Activated T-helper 1 cell treated with anti-CD3 and anti-CD28 coated beads, Interleukin-12 subunit alpha, Interleukin-12 subunit beta, Interleukin-2, Interleukin-4 antibody, amounts not matched to agents 30 ng/mL and 10 ng/mL and 1 ng/mL, durations not matched to agents 14 hours and 24 hours and 36 hours (primary cell): ENCODE measurements at regions of chr18 and their contacts with region 1.

Region 1: GRCh38 chr18:12838178-12838634 is 45.8 kb downstream of the PTPN2 start:
- DNase-seq: peak; percentile 16
- H3K4me3 Mint-ChIP-seq: peak overlapping the region; percentile 78
- H3K27ac Mint-ChIP-seq: peak overlapping the region; percentile 92
- H3K4me1 Mint-ChIP-seq: peaks cover 78% of the 10 kb centered on the region
- H3K27me3 Mint-ChIP-seq: no peaks in the 10 kb centered on the region

Region 2: GRCh38 chr18:12702221-12703095 is 135.7 kb before region 1 on chr18 and contains the starts of genes CEP76 and PSMG2:
- intact Hi-C with region 1: loop called (anchors 1 kb)
- DNase-seq: peak; percentile 80
- H3K4me3 Mint-ChIP-seq: peak within 1 kb of the TSS; percentile 97
- H3K27ac Mint-ChIP-seq: peak within 1 kb of the TSS; percentile 92
- H3K4me1 Mint-ChIP-seq: peaks cover 54% of the 10 kb centered on the region
- H3K27me3 Mint-ChIP-seq: no peaks in the 10 kb centered on the region
- total RNA-seq, gene CEP76: 16.1 and 17.5 TPM in 2 replicates
- total RNA-seq, gene PSMG2: 113 and 118 TPM in 2 replicates

Region 3: DNA sequence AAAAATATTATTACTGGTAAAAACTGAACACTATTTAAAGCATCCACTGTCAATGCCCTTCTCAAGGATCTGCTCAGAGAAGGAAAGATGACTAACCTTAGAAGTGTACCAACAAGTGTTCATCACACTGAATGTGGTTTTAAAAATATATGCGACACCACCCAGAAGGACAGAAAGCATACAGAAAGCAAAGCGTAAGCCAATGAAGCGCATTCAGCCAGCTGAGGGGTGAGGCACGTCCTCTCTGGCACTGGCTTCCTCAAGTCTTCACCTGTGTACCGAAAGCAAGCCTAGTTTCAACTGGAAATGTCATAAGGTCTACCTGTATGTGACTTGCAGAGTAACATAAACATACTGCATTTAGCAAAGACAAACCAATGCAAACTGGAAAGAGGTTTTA is 46.6 kb before region 1 on chr18:
- intact Hi-C with region 1: no loop called
- DNase-seq: no peak
- H3K4me3 Mint-ChIP-seq: no peak overlapping the region
- H3K27ac Mint-ChIP-seq: no peak overlapping the region
- H3K4me1 Mint-ChIP-seq: peaks cover 18% of the 10 kb centered on the region
- H3K27me3 Mint-ChIP-seq: no peaks in the 10 kb centered on the region

Region 4: GRCh38 chr18:12803096-12803936 is 34.9 kb before region 1 on chr18:
- intact Hi-C with region 1: loop called (anchors 5 kb)
- DNase-seq: no peak
- H3K4me3 Mint-ChIP-seq: no peak overlapping the region
- H3K27ac Mint-ChIP-seq: peak overlapping the region; percentile 1
- H3K4me1 Mint-ChIP-seq: peaks cover 33% of the 10 kb centered on the region
- H3K27me3 Mint-ChIP-seq: no peaks in the 10 kb centered on the region

Region 5: DNA sequence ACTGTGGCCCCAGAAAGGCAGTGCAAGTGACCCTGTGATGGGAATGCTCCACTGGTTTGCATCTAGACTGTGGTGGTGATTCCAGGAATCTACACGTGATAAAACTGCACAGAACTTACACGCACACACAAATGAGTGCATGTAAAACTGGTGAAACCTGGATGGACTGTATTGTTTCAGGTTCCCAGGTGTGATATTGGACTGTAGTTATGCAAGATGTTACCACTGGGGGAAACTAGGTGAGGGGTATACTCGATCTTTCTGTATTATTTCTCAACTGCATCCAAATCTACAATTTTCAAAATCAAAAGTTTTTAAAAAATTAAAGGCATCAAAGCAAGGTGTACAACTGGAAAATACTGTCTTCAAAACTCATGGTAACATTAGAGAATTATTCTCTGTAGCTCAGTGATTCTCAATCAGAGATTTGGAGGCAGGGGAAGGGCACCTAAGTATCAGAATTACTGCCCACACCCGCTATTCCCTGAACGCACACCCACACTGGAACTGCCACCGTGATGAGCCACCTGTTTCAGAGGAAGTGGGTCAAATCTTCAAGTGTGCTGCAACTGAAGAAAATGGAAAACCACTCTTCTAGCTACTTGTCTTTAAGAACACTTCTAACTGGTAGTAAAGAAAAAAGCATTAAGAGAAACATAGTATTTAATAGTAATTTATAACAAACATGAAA is 19.2 kb after region 1 on chr18:
- intact Hi-C with region 1: loop called (anchors 1 kb)
- DNase-seq: no peak
- H3K4me3 Mint-ChIP-seq: peak overlapping the region; percentile 53
- H3K27ac Mint-ChIP-seq: peak overlapping the region; percentile 77
- H3K4me1 Mint-ChIP-seq: peaks cover 83% of the 10 kb centered on the region
- H3K27me3 Mint-ChIP-seq: no peaks in the 10 kb centered on the region

Region 6: GRCh38 chr18:12895014-12895413 is 56.8 kb after region 1 on chr18:
- intact Hi-C with region 1: no loop called
- DNase-seq: no peak
- H3K4me3 Mint-ChIP-seq: no peak overlapping the region
- H3K27ac Mint-ChIP-seq: no peak overlapping the region
- H3K4me1 Mint-ChIP-seq: peaks cover 22% of the 10 kb centered on the region
- H3K27me3 Mint-ChIP-seq: peaks cover 28% of the 10 kb centered on the region

Region 7: DNA sequence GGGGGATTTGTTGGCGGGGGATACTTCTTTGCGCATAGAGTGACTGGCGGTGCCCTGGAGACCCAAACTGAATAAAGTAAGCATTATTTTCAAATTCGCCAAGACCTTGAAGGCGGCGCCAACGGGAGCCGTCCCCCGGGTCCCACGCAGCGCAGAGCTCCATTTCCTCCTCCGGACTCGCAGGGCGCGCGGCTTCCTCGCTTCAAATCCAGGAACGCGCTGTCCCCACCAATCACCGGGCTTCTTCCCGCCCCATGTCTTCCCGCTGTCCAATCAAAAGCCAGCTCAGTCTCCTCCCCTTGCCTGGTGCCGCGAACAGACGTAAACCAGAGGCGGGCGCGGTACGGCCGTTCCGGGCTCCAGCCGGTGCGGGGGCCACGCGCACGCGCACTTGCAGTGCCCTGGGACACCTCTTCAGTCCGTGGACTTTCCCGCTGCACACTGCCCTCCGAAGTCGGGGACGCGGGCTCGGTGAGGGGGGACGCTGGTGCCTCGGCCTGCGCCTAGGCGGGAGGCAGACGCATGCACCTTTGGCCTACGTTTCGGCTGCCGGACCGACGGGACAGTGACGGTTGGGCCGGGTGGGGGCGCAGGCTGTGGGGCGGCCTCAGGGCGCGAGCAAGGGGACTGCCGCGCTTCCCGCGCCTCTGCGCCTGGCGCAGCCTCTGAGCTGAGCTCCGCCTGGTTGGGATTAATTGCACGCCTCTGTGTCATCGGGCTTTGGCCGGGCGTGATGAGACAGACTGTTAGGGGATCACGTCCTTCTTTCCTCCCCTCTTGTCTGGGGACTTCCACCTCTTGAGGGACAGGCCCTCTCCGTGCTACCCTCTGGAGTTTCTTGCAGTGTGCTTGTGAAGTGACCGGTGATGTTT is 153.0 kb after region 1 on chr18 and contains the start of gene CEP192:
- intact Hi-C with region 1: loop called (anchors 1 kb)
- DNase-seq: peak; percentile 98
- H3K4me3 Mint-ChIP-seq: peak within 1 kb of the TSS; percentile 93
- H3K27ac Mint-ChIP-seq: peak within 1 kb of the TSS; percentile 94
- H3K4me1 Mint-ChIP-seq: peaks cover 24% of the 10 kb centered on the region
- H3K27me3 Mint-ChIP-seq: peaks cover 1% of the 10 kb centered on the region
- total RNA-seq, gene CEP192: 31.2 and 32.0 TPM in 2 replicates

Region 8: GRCh38 chr18:13437796-13438504 is 599.7 kb after region 1 on chr18:
- intact Hi-C with region 1: no loop called
- DNase-seq: peak; percentile 48
- H3K4me3 Mint-ChIP-seq: peak overlapping the region; percentile 53
- H3K27ac Mint-ChIP-seq: peak overlapping the region; percentile 91
- H3K4me1 Mint-ChIP-seq: peaks cover 77% of the 10 kb centered on the region
- H3K27me3 Mint-ChIP-seq: no peaks in the 10 kb centered on the region

Region 9: GRCh38 chr18:13585379-13586153 is 747.4 kb after region 1 on chr18:
- intact Hi-C with region 1: loop called (anchors 10 kb)
- DNase-seq: no peak
- H3K4me3 Mint-ChIP-seq: no peak overlapping the region
- H3K27ac Mint-ChIP-seq: no peak overlapping the region
- H3K4me1 Mint-ChIP-seq: peaks cover 55% of the 10 kb centered on the region
- H3K27me3 Mint-ChIP-seq: no peaks in the 10 kb centered on the region